Upper lobe of right lung (tissue), 1 donor: ENCODE measurements at regions of chr19 and their contacts with region 1.

Region 1: GRCh38 chr19:11125994-11126685 is 29.4 kb downstream of the SPC24 start:
- DNase-seq: peak; percentile 80
- ATAC-seq: peak; percentile 77
- H3K4me3 ChIP-seq: no peak overlapping the region
- H3K27ac ChIP-seq: no peak overlapping the region
- H3K4me1 ChIP-seq: peaks cover 7% of the 10 kb centered on the region
- H3K27me3 ChIP-seq: no peaks in the 10 kb centered on the region
- CTCF ChIP-seq: peak; percentile 80

Region 2: DNA sequence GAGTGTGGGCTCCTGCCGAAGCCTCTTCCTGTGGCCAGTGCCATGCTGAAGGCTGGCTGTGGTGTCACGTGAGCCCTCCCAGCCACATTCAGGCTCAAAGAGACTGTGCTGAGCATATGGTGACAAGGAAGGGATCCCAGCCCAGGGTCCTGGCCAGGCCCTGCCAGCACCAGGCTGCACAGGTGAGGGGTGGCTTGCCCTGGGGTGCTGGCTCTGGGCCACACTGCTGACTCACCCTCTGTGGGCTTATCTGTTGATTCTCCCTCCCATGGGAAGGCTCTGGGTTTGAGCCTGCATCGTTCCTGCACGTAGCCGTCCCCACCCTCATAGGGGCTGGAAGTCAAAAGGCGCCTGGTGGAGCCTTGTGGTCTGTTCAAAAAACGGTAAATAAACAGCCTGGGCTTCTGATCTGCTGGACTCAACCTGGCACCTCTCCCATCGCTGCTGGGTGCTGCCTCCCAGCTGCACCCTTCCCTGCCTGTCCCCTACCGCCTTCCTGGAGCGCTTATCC is 377.2 kb before region 1 on chr19:
- intact Hi-C with region 1: no loop called
- DNase-seq: peak; percentile 86
- ATAC-seq: peak; percentile 41
- H3K4me3 ChIP-seq: no peak overlapping the region
- H3K27ac ChIP-seq: peak overlapping the region; percentile 85
- H3K4me1 ChIP-seq: peaks cover 74% of the 10 kb centered on the region
- H3K27me3 ChIP-seq: no peaks in the 10 kb centered on the region
- CTCF ChIP-seq: no peak

Region 3: GRCh38 chr19:11035441-11036377 is 90.4 kb before region 1 on chr19:
- intact Hi-C with region 1: loop called (anchors 5 kb)
- DNase-seq: peak; percentile 94
- ATAC-seq: peak; percentile 97
- H3K4me3 ChIP-seq: no peak overlapping the region
- H3K27ac ChIP-seq: peak overlapping the region; percentile 2
- H3K4me1 ChIP-seq: peaks cover 4% of the 10 kb centered on the region
- H3K27me3 ChIP-seq: no peaks in the 10 kb centered on the region
- CTCF ChIP-seq: peak; percentile 94

Region 4: GRCh38 chr19:11203194-11204075 is 77.3 kb after region 1 on chr19:
- intact Hi-C with region 1: loop called (anchors 5 kb)
- DNase-seq: peak; percentile 82
- ATAC-seq: peak; percentile 77
- H3K4me3 ChIP-seq: no peak overlapping the region
- H3K27ac ChIP-seq: peak overlapping the region; percentile 77
- H3K4me1 ChIP-seq: peaks cover 17% of the 10 kb centered on the region
- H3K27me3 ChIP-seq: no peaks in the 10 kb centered on the region
- CTCF ChIP-seq: peak; percentile 77

Region 5: GRCh38 chr19:11223214-11223613 is 97.1 kb after region 1 on chr19:
- intact Hi-C with region 1: no loop called
- DNase-seq: no peak
- ATAC-seq: peak; percentile 44
- H3K4me3 ChIP-seq: no peak overlapping the region
- H3K27ac ChIP-seq: no peak overlapping the region
- H3K4me1 ChIP-seq: no peaks in the 10 kb centered on the region
- H3K27me3 ChIP-seq: no peaks in the 10 kb centered on the region
- CTCF ChIP-seq: no peak